ENCODE measurements at regions of chr12 and their contacts with region 1.

Region 1: GRCh38 chr12:76037130-76038103 is 5.8 kb upstream of the PHLDA1 start:
- DNase-seq: peak in 3 of 5 donors; percentile 49 to 63 (median 53)
- H3K4me3 ChIP-seq: no peak overlapping the region
- H3K4me3 Mint-ChIP-seq: peak overlapping the region in 1 of 7 donors; percentile 10
- H3K27ac ChIP-seq: no peak overlapping the region
- H3K27ac Mint-ChIP-seq: peak overlapping the region in 7 of 8 donors; percentile 0 to 72 (median 12)
- H3K4me1 ChIP-seq: peaks cover 5% of the 10 kb centered on the region
- H3K4me1 Mint-ChIP-seq: peaks cover 5 to 20% (median 12%) of the 10 kb centered on the region in 3 donors
- H3K27me3 ChIP-seq: no peaks in the 10 kb centered on the region
- H3K27me3 Mint-ChIP-seq: no peaks in the 10 kb centered on the region

Region 2: GRCh38 chr12:75526655-75527511 is 510.5 kb before region 1 on chr12:
- CTCF ChIA-PET with region 1: interaction called, 46 read pairs
- POLR2A ChIA-PET with region 1: interaction called, 6 read pairs
- DNase-seq: no peak
- H3K4me3 ChIP-seq: no peak overlapping the region
- H3K4me3 Mint-ChIP-seq: no peak overlapping the region
- H3K27ac ChIP-seq: no peak overlapping the region
- H3K27ac Mint-ChIP-seq: no peak overlapping the region
- H3K4me1 ChIP-seq: no peaks in the 10 kb centered on the region
- H3K4me1 Mint-ChIP-seq: peaks cover 1 to 7% (median 3%) of the 10 kb centered on the region in 3 donors
- H3K27me3 ChIP-seq: no peaks in the 10 kb centered on the region
- H3K27me3 Mint-ChIP-seq: peaks cover 11 to 37% of the 10 kb centered on the region in 2 donors

Region 3: GRCh38 chr12:76055393-76055792 is 18.0 kb after region 1 on chr12:
- CTCF ChIA-PET with region 1: no interaction called
- POLR2A ChIA-PET with region 1: no interaction called
- DNase-seq: no peak
- H3K4me3 ChIP-seq: no peak overlapping the region
- H3K4me3 Mint-ChIP-seq: no peak overlapping the region
- H3K27ac ChIP-seq: no peak overlapping the region
- H3K27ac Mint-ChIP-seq: peak overlapping the region in 2 of 8 donors; percentile 38 to 51
- H3K4me1 ChIP-seq: no peaks in the 10 kb centered on the region
- H3K4me1 Mint-ChIP-seq: peaks cover 0 to 8% (median 3%) of the 10 kb centered on the region in 3 donors
- H3K27me3 ChIP-seq: no peaks in the 10 kb centered on the region
- H3K27me3 Mint-ChIP-seq: no peaks in the 10 kb centered on the region